GM12878 (cell line): ENCODE measurements at regions of chr11 and their contacts with region 1.

Region 1: GRCh38 chr11:66001942-66002647 is at the starts of genes BANF1 and EIF1AD:
- DNase-seq: peak; percentile 93
- ATAC-seq: peak; percentile 87
- H3K4me3 ChIP-seq: peak within 1 kb of the TSS; percentile 93
- H3K27ac ChIP-seq: peak within 1 kb of the TSS; percentile 93
- H3K4me1 ChIP-seq: peaks cover 11% of the 10 kb centered on the region
- H3K27me3 ChIP-seq: no peaks in the 10 kb centered on the region
- CTCF ChIP-seq: no peak
- EP300 ChIP-seq: no peak; a peak in 1 of 4 replicates
- POLR2A ChIP-seq: peak; percentile 96
- RAD21 ChIP-seq: no peak
- polyA plus RNA-seq, gene BANF1: 501 to 574 TPM
- polyA plus RNA-seq, gene EIF1AD: 51.5 to 56.8 TPM

Region 2: GRCh38 chr11:65873318-65874156 is 128.6 kb before region 1 on chr11:
- CTCF ChIA-PET with region 1: interaction called, 3 read pairs
- POLR2A ChIA-PET with region 1: interaction called, 11 read pairs
- RAD21 ChIA-PET with region 1: no interaction called
- SMC1A ChIA-PET with region 1: no interaction called
- in situ Hi-C with region 1: no loop called
- intact Hi-C with region 1: no loop called
- DNase-seq: peak; percentile 87
- ATAC-seq: peak; percentile 89
- H3K4me3 ChIP-seq: peak overlapping the region; percentile 87
- H3K27ac ChIP-seq: peak overlapping the region; percentile 51
- H3K4me1 ChIP-seq: peaks cover 11% of the 10 kb centered on the region
- H3K27me3 ChIP-seq: no peaks in the 10 kb centered on the region
- CTCF ChIP-seq: no peak
- EP300 ChIP-seq: no peak
- POLR2A ChIP-seq: peak; percentile 83
- RAD21 ChIP-seq: no peak

Region 3: GRCh38 chr11:65961232-65961901 is 40.7 kb before region 1 on chr11 and contains the start of gene SART1:
- CTCF ChIA-PET with region 1: no interaction called
- POLR2A ChIA-PET with region 1: interaction called, 3 read pairs
- RAD21 ChIA-PET with region 1: interaction called, 3 read pairs
- SMC1A ChIA-PET with region 1: no interaction called
- in situ Hi-C with region 1: no loop called
- intact Hi-C with region 1: loop called (anchors 1 kb)
- DNase-seq: peak; percentile 94
- ATAC-seq: peak; percentile 95
- H3K4me3 ChIP-seq: peak within 1 kb of the TSS; percentile 95
- H3K27ac ChIP-seq: peak within 1 kb of the TSS; percentile 96
- H3K4me1 ChIP-seq: peaks cover 16% of the 10 kb centered on the region
- H3K27me3 ChIP-seq: no peaks in the 10 kb centered on the region
- CTCF ChIP-seq: no peak
- EP300 ChIP-seq: no peak
- POLR2A ChIP-seq: peak; percentile 92
- RAD21 ChIP-seq: no peak
- polyA plus RNA-seq, gene SART1: 6.2 to 14.8 TPM

Region 4: GRCh38 chr11:65992056-65992455 is 10.0 kb before region 1 on chr11:
- CTCF ChIA-PET with region 1: no interaction called
- POLR2A ChIA-PET with region 1: no interaction called
- RAD21 ChIA-PET with region 1: no interaction called
- SMC1A ChIA-PET with region 1: no interaction called
- in situ Hi-C with region 1: no loop called
- intact Hi-C with region 1: no loop called
- DNase-seq: no peak
- ATAC-seq: no peak
- H3K4me3 ChIP-seq: no peak overlapping the region
- H3K27ac ChIP-seq: no peak overlapping the region
- H3K4me1 ChIP-seq: no peaks in the 10 kb centered on the region
- H3K27me3 ChIP-seq: no peaks in the 10 kb centered on the region
- CTCF ChIP-seq: no peak
- EP300 ChIP-seq: no peak
- POLR2A ChIP-seq: no peak
- RAD21 ChIP-seq: no peak

Region 5: DNA sequence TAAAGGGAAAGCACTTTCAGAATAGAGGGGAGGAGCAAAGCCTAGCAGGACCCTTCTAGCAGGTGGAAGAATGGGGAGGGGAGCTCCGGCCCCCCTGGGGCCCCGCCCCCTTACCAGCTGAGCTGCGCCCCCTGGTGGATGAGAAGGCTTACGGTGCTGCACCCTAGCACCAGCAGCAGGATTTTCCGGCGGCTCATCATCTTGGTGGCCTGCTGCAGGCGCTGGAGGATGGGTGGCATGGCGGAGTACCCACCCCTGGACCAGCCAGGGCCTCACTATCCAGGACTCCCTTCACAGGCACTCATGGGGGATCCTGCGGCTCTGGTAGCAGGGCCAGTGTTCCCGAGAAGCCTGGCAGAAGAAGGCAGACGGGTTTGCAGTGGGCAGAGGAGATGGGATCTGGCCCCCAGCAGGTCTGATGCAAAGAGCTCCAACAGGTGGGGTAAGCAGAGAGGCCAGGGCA is 43.1 kb after region 1 on chr11:
- CTCF ChIA-PET with region 1: interaction called, 14 read pairs
- POLR2A ChIA-PET with region 1: no interaction called
- RAD21 ChIA-PET with region 1: interaction called, 5 read pairs
- SMC1A ChIA-PET with region 1: no interaction called
- in situ Hi-C with region 1: no loop called
- intact Hi-C with region 1: no loop called
- DNase-seq: no peak
- ATAC-seq: peak; percentile 98
- H3K4me3 ChIP-seq: no peak overlapping the region
- H3K27ac ChIP-seq: no peak overlapping the region
- H3K4me1 ChIP-seq: peaks cover 2% of the 10 kb centered on the region; the same call in 1 of the 2 replicates
- H3K27me3 ChIP-seq: no peaks in the 10 kb centered on the region
- CTCF ChIP-seq: peak; percentile 86 to 94 (median 89)
- EP300 ChIP-seq: no peak
- POLR2A ChIP-seq: no peak
- RAD21 ChIP-seq: peak; percentile 45